Activated naive CD4-positive, alpha-beta T cell treated with anti-CD3 and anti-CD28 coated beads, Interleukin-2, amount 10 ng/mL, durations not matched to agents 7 days and 5 days (primary cell): ENCODE measurements at regions of chr1 and their contacts with region 1.

Region 1: DNA sequence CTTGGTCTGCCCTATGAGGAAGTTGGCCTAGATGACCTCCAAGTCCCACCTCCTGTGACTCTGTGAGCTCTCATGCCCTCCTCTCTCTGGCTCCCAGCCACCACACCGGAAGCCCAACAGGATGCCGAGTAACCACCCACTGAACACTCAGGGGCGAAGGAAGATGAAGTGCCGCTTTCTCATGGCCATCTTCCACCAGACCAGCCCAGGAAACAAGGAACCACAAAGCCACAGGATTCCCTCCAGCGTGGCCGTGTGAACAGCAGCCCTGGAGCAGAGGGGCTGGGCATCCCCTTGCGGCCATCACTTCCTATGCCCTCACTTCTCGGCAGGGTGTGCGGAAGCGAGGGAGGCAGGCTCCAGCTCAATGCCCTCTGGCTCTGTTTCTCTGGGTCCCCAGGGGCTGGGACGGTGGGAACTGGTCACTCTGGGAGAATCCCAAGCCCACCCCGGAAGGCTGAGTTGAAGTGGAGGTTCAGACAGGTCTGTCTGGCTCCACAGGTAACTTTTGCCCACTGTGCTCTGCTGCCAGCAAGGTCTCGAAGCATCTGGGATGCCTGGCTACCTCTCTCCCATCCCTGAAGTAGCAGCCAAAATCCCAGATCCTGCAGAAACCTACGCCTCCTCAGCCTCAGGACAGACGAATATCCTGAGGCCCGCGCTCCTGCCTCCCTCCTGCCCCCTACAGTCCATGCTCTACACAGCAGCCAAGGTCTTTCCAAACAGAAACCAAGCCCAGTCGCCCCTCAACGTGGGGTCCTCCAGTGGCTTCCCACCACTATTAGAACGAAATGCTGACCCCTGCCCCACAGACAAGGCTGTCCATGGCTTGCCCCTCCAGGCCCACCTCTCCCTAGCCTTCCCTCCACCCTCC is 44.2 kb upstream of the ECE1 start:
- DNase-seq: peak; percentile 88
- H3K4me3 Mint-ChIP-seq: peak overlapping the region; percentile 72
- H3K27ac Mint-ChIP-seq: peak overlapping the region; percentile 96
- H3K4me1 Mint-ChIP-seq: peaks cover 91% of the 10 kb centered on the region
- H3K27me3 Mint-ChIP-seq: no peaks in the 10 kb centered on the region

Region 2: GRCh38 chr1:21344750-21345443 is 10.4 kb after region 1 on chr1:
- CTCF ChIA-PET with region 1: interaction called, 10 read pairs
- DNase-seq: peak; percentile 56
- H3K4me3 Mint-ChIP-seq: peak overlapping the region; percentile 87
- H3K27ac Mint-ChIP-seq: peak overlapping the region; percentile 89
- H3K4me1 Mint-ChIP-seq: peaks cover 41% of the 10 kb centered on the region
- H3K27me3 Mint-ChIP-seq: peaks cover 3% of the 10 kb centered on the region